ENCODE measurements at regions of chr7 and their contacts with region 1.

Region 1: GRCh38 chr7:76166404-76167255 is 35.1 kb upstream of the SRRM3 start:
- DNase-seq: peak; percentile 95
- ATAC-seq: peak; percentile 84
- H3K4me3 ChIP-seq: peak overlapping the region in 4 of 5 experiments; percentile 64 to 85 (median 82)
- H3K4me3 Mint-ChIP-seq: peak overlapping the region; percentile 89
- H3K27ac ChIP-seq: peak overlapping the region; percentile 75 to 81
- H3K27ac Mint-ChIP-seq: peak overlapping the region; percentile 71
- H3K4me1 ChIP-seq: peaks cover 0 to 10% of the 10 kb centered on the region in 2 donors
- H3K4me1 Mint-ChIP-seq: peaks cover 4% of the 10 kb centered on the region
- H3K27me3 ChIP-seq: no peaks in the 10 kb centered on the region
- H3K27me3 Mint-ChIP-seq: no peaks in the 10 kb centered on the region
- CTCF ChIP-seq: no peak

Region 2: DNA sequence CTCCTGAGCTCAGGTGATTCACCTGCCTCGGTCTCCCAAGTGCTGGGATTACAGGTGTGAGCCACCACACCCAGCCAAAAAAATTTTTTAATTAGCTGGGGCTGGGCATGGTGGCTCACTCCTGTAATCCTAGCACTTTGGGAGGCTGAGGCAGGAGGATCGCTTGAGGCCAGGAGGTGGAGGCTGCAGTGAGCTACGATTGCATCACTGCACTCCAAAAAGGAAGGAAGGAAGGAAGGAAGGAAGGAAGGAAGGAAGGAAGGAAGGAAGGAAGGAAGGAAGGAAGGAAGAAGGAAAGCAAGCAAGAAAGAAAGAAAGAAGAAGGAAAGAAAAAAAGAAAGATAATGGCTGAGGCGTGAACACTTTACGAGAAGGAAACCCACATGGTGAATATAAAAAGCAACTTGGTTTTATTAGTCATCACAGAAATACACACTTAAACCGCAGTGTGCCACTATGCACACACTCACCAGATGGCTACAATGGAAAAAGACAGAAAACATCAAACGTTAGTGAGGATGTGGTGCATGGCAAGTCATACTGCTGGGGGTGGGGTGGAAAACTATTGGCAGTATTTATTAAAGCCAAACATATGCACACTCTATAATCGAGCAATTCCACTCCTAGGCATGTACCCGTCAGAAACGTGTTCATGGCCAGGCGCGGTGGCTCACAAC is 390.2 kb before region 1 on chr7:
- CTCF ChIA-PET with region 1: no interaction called
- POLR2A ChIA-PET with region 1: interaction called, 11 read pairs
- intact Hi-C with region 1: no loop called
- DNase-seq: no peak
- ATAC-seq: peak; percentile 31
- H3K4me3 ChIP-seq: no peak overlapping the region
- H3K4me3 Mint-ChIP-seq: no peak overlapping the region
- H3K27ac ChIP-seq: no peak overlapping the region
- H3K27ac Mint-ChIP-seq: no peak overlapping the region
- H3K4me1 ChIP-seq: no peaks in the 10 kb centered on the region
- H3K4me1 Mint-ChIP-seq: peaks cover 5% of the 10 kb centered on the region
- H3K27me3 ChIP-seq: no peaks in the 10 kb centered on the region
- H3K27me3 Mint-ChIP-seq: peaks cover 13% of the 10 kb centered on the region
- CTCF ChIP-seq: no peak

Region 3: GRCh38 chr7:76047811-76048667 is 118.6 kb before region 1 on chr7 and contains the starts of genes MDH2 and STYXL1:
- CTCF ChIA-PET with region 1: no interaction called
- POLR2A ChIA-PET with region 1: no interaction called
- intact Hi-C with region 1: loop called (anchors 5 kb)
- DNase-seq: peak; percentile 90
- ATAC-seq: peak; percentile 93
- H3K4me3 ChIP-seq: peak within 1 kb of the TSS; percentile 91 to 99 (median 99)
- H3K4me3 Mint-ChIP-seq: peak within 1 kb of the TSS; percentile 94
- H3K27ac ChIP-seq: peak within 1 kb of the TSS; percentile 77 to 91
- H3K27ac Mint-ChIP-seq: peak within 1 kb of the TSS; percentile 93
- H3K4me1 ChIP-seq: peaks cover 14 to 16% of the 10 kb centered on the region in 2 donors
- H3K4me1 Mint-ChIP-seq: peaks cover 44% of the 10 kb centered on the region
- H3K27me3 ChIP-seq: no peaks in the 10 kb centered on the region
- H3K27me3 Mint-ChIP-seq: no peaks in the 10 kb centered on the region
- CTCF ChIP-seq: no peak
- total RNA-seq, gene MDH2: 77.1 and 77.2 TPM in 2 replicates
- total RNA-seq, gene STYXL1: 15.2 and 17.8 TPM in 2 replicates

Region 4: DNA sequence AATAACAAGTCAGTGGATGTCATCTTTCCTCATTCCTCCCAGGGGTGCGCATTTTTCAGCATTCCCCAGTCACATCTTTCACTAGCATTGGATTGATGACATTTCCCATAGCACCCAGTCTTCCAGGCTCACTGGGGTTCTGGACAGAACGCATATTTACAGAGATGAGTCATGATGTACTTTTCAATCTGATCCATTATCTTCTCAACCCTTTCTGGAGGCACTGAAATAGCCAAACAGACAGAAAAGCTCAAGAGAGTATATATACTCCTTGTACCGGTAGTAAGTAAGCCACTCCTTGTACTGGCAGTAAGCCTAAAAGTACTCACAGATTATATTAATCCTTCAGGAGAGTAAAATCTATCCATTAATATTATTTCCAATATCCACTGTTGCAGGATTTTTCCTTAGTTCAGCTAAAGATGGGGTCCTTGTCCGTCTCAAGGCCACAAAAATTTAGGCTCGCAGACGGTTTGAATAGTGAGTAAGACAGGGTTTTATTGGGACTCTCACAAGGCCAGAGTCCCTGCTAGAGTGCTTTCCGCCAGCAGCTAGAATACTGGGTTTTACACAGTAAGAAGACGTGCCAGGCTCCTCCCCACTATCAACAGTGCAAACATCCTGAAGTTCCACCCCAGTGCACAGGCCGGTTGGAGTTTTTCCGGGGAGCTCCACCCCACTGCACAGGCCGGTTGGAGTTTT is 57.9 kb before region 1 on chr7:
- CTCF ChIA-PET with region 1: no interaction called
- POLR2A ChIA-PET with region 1: interaction called, 15 read pairs
- intact Hi-C with region 1: no loop called
- DNase-seq: no peak
- ATAC-seq: no peak
- H3K4me3 ChIP-seq: no peak overlapping the region
- H3K4me3 Mint-ChIP-seq: no peak overlapping the region
- H3K27ac ChIP-seq: no peak overlapping the region
- H3K27ac Mint-ChIP-seq: no peak overlapping the region
- H3K4me1 ChIP-seq: no peaks in the 10 kb centered on the region
- H3K4me1 Mint-ChIP-seq: no peaks in the 10 kb centered on the region
- H3K27me3 ChIP-seq: no peaks in the 10 kb centered on the region
- H3K27me3 Mint-ChIP-seq: peaks cover 3% of the 10 kb centered on the region
- CTCF ChIP-seq: no peak

Region 5: GRCh38 chr7:76179686-76180085 is 13.1 kb after region 1 on chr7:
- CTCF ChIA-PET with region 1: interaction called, 13 read pairs
- POLR2A ChIA-PET with region 1: no interaction called
- intact Hi-C with region 1: no loop called
- DNase-seq: no peak
- ATAC-seq: no peak
- H3K4me3 ChIP-seq: no peak overlapping the region
- H3K4me3 Mint-ChIP-seq: no peak overlapping the region
- H3K27ac ChIP-seq: no peak overlapping the region
- H3K27ac Mint-ChIP-seq: no peak overlapping the region
- H3K4me1 ChIP-seq: peaks cover 0 to 6% of the 10 kb centered on the region in 2 donors
- H3K4me1 Mint-ChIP-seq: peaks cover 3% of the 10 kb centered on the region
- H3K27me3 ChIP-seq: no peaks in the 10 kb centered on the region
- H3K27me3 Mint-ChIP-seq: peaks cover 4% of the 10 kb centered on the region
- CTCF ChIP-seq: no peak

Region 6: GRCh38 chr7:76336094-76336493 is 169.5 kb after region 1 on chr7:
- CTCF ChIA-PET with region 1: no interaction called
- POLR2A ChIA-PET with region 1: interaction called, 12 read pairs
- intact Hi-C with region 1: no loop called
- DNase-seq: no peak
- ATAC-seq: no peak
- H3K4me3 ChIP-seq: no peak overlapping the region
- H3K4me3 Mint-ChIP-seq: no peak overlapping the region
- H3K27ac ChIP-seq: no peak overlapping the region
- H3K27ac Mint-ChIP-seq: no peak overlapping the region
- H3K4me1 ChIP-seq: peaks cover 8 to 19% of the 10 kb centered on the region in 2 donors
- H3K4me1 Mint-ChIP-seq: peaks cover 49% of the 10 kb centered on the region
- H3K27me3 ChIP-seq: no peaks in the 10 kb centered on the region
- H3K27me3 Mint-ChIP-seq: no peaks in the 10 kb centered on the region
- CTCF ChIP-seq: no peak

Measured in B cell (primary cell).